Activated CD4-positive, alpha-beta memory T cell treated with anti-CD3 and anti-CD28 coated beads for 36 hours (primary cell): ENCODE measurements at regions of chr1 and their contacts with region 1.

Region 1: GRCh38 chr1:168178638-168179437 is at the start of gene TIPRL:
- DNase-seq: peak; percentile 96
- H3K4me3 Mint-ChIP-seq: no peak within 1 kb of the TSS
- H3K27ac Mint-ChIP-seq: no peak within 1 kb of the TSS
- H3K4me1 Mint-ChIP-seq: peaks cover 10% of the 10 kb centered on the region
- H3K27me3 Mint-ChIP-seq: no peaks in the 10 kb centered on the region
- total RNA-seq, gene TIPRL: 51.1 to 54.2 TPM

Region 2: GRCh38 chr1:167715157-167715999 is 463.5 kb before region 1 on chr1:
- CTCF ChIA-PET with region 1: no interaction called
- POLR2A ChIA-PET with region 1: no interaction called
- intact Hi-C with region 1: loop called (anchors 2 kb)
- DNase-seq: peak; percentile 93
- H3K4me3 Mint-ChIP-seq: peak overlapping the region; percentile 80
- H3K27ac Mint-ChIP-seq: peak overlapping the region; percentile 93
- H3K4me1 Mint-ChIP-seq: peaks cover 35% of the 10 kb centered on the region
- H3K27me3 Mint-ChIP-seq: peaks cover 7% of the 10 kb centered on the region

Region 3: DNA sequence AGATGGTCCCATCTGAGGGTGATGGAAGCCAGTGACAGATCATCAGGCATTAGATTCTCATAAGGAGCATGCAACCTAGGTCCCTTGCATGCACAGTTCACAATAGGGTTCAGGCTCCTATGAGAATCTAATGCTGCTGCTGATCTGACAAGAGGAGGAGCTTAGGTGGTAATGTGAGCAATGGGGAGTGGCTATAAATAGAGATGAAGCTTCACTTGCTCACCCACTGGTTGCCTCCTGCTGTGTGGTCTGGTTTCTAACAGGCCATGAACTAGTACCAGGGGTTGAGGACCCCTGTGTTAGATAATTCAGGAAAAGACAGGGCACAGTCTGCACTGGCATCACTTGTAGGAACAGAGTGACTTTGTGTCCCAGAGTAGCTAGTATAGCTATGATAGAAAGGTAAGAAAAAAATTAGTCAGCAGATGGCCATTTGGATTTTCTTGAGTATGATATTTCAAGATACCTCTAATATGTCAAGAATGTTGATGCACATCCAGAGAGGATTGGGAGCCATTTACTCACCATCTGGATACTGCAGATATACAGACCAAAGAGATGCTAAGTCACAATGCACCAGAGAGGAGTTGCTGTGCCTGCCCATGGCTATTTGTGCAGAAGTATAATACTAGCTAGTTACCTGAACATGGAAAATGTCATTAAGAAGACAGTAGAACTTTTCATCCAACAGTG is 318.5 kb before region 1 on chr1:
- CTCF ChIA-PET with region 1: no interaction called
- POLR2A ChIA-PET with region 1: no interaction called
- intact Hi-C with region 1: no loop called
- DNase-seq: no peak
- H3K4me3 Mint-ChIP-seq: no peak overlapping the region
- H3K27ac Mint-ChIP-seq: no peak overlapping the region
- H3K4me1 Mint-ChIP-seq: no peaks in the 10 kb centered on the region
- H3K27me3 Mint-ChIP-seq: no peaks in the 10 kb centered on the region

Region 4: GRCh38 chr1:168138134-168138533 is 40.7 kb before region 1 on chr1:
- CTCF ChIA-PET with region 1: no interaction called
- POLR2A ChIA-PET with region 1: no interaction called
- intact Hi-C with region 1: loop called (anchors 1 kb)
- DNase-seq: no peak
- H3K4me3 Mint-ChIP-seq: no peak overlapping the region
- H3K27ac Mint-ChIP-seq: peak overlapping the region; percentile 14
- H3K4me1 Mint-ChIP-seq: peaks cover 43% of the 10 kb centered on the region
- H3K27me3 Mint-ChIP-seq: peaks cover 27% of the 10 kb centered on the region

Region 5: DNA sequence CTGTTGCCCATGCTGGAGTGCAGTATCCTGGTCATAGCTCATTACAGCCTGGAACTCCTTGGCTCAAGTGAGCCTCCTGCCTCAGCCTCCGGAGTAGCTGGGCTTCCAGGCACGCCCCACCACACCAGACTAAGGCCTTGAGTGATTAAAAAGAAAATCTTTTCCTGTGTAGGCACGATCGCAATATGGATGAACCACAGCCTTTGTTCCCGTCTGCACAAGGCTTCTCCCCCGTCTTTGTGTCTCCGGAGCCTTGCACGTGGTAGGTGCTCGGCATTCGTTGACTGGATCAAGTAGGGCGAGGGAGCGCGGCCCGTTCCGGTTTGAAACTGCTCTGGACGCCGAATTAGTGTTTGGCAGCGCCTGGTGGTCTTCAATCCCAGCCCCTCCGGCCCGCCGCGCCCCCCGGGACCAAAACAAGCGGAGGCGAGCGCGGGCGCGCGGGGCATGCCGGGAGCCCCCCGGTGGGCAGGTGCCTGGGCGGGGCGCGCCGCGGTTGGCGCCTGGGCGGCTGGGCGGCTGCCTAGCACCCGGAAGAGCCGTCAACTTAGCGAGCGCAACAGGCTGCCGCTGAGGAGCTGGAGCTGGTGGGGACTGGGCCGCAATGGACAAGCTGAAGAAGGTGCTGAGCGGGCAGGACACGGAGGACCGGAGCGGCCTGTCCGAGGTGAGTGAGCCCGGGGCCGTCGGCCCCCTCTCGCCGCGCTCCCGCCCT is 46.8 kb after region 1 on chr1 and contains the start of gene SFT2D2:
- CTCF ChIA-PET with region 1: no interaction called
- POLR2A ChIA-PET with region 1: interaction called, 13 read pairs
- intact Hi-C with region 1: loop called (anchors 1 kb)
- DNase-seq: peak; percentile 83
- H3K4me3 Mint-ChIP-seq: peak within 1 kb of the TSS; percentile 91
- H3K27ac Mint-ChIP-seq: peak within 1 kb of the TSS; percentile 84
- H3K4me1 Mint-ChIP-seq: peaks cover 43% of the 10 kb centered on the region
- H3K27me3 Mint-ChIP-seq: peaks cover 7% of the 10 kb centered on the region
- total RNA-seq, gene SFT2D2: 52.3 to 52.9 TPM

Region 6: DNA sequence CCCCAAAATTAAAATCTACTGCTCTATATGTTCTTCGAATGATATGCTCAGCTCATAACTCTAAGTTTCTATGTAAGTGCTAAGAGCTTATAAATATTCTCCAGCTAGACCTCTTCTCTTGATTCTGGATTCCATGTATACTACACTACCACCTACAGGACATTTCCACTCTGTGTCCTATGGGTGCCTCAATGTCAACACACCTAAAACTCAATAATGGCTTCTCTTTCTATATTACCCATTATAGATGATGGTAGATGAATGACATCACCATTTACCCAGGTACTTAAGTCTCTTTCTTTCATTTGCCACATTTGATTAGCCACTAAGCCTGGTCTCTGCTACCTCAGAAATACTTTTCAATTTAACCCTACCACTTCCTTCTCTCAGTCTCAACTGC is 143.1 kb after region 1 on chr1:
- CTCF ChIA-PET with region 1: no interaction called
- POLR2A ChIA-PET with region 1: no interaction called
- intact Hi-C with region 1: loop called (anchors 2 kb)
- DNase-seq: no peak
- H3K4me3 Mint-ChIP-seq: no peak overlapping the region
- H3K27ac Mint-ChIP-seq: no peak overlapping the region
- H3K4me1 Mint-ChIP-seq: peaks cover 10% of the 10 kb centered on the region
- H3K27me3 Mint-ChIP-seq: no peaks in the 10 kb centered on the region